Activated CD4-positive, alpha-beta memory T cell treated with anti-CD3 and anti-CD28 coated beads for 36 hours (primary cell): ENCODE measurements at regions of chr10 and their contacts with region 1.

Region 1: DNA sequence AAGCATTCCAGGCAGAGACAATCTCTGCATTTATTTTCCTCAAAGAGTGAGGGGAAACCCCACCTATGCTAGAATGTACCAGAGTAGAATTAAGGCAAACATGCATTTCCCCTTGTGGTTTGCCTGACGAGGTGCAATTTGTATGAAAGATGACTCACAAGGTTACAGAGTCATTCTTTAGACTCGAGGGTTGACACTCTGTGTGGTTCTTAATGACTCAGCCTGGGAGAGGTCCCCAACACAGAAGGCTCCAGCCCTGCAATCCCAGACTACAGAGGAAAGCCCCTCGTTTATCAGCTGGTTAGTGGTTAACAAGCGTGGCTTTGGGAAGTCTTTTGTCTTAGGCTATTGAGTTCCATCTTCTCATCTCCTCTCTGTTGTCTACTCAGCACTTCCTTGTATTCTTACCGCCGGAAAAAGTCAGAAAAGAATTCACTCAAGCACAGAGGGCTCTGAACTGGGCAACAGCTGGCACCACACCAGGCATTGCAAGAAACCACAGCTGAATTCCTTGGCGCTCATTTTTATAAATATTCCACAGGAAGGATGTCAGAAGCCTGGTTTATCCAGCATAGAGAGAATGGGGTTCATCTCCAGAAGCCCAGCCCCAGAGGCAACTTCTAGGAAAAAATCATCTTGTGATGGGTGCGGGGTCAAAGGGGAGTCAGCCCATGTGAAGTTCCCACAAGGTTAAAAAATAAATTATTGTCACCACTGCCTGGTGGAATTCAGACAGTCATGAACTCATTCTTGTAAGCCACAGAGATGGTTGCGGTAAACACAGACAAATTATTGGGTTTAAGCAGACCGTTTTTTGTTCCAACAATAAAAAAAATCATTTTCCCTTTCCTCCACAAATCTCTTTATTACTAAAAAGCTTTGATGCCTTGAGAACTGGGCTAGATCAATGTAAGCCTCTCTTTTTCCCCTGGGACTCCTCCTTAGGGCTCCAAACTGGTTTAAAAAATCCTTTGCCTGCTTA is 24.5 kb upstream of the SVIL start:
- DNase-seq: peak; percentile 81
- H3K4me3 Mint-ChIP-seq: peak overlapping the region; percentile 53
- H3K27ac Mint-ChIP-seq: peak overlapping the region; percentile 49
- H3K4me1 Mint-ChIP-seq: peaks cover 32% of the 10 kb centered on the region
- H3K27me3 Mint-ChIP-seq: peaks cover 4% of the 10 kb centered on the region

Region 2: DNA sequence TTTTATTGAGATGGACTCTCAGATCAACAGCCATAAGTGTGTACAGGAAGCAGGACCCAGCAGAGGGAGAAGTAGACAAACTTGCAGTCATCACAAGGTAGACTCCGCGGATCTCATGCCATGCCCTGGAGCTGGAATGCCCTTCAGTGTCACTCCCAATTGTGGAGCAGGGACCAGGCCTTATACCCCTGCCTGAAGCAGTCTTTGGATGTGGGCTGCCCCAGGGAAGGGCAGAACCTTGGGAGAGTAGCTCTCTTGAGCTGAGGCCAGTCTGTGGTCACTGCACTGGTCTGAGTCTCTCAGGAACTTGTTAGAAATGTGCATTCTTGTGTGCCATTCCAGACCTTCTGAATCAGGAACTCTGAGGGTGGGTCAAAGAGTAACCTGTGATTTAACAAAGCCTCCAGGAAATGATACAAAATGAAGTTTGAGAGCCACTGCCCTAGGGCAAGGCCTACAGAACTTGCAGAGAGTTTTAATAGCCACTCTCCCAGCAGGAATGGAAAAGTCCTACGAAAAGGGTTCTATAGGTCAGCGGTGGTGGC is 302.4 kb before region 1 on chr10:
- CTCF ChIA-PET with region 1: no interaction called
- POLR2A ChIA-PET with region 1: no interaction called
- intact Hi-C with region 1: no loop called
- DNase-seq: no peak
- H3K4me3 Mint-ChIP-seq: no peak overlapping the region
- H3K27ac Mint-ChIP-seq: no peak overlapping the region
- H3K4me1 Mint-ChIP-seq: no peaks in the 10 kb centered on the region
- H3K27me3 Mint-ChIP-seq: no peaks in the 10 kb centered on the region

Region 3: GRCh38 chr10:29590915-29591650 is 68.2 kb before region 1 on chr10:
- CTCF ChIA-PET with region 1: interaction called, 3 read pairs
- POLR2A ChIA-PET with region 1: no interaction called
- intact Hi-C with region 1: loop called (anchors 5 kb)
- DNase-seq: no peak
- H3K4me3 Mint-ChIP-seq: no peak overlapping the region
- H3K27ac Mint-ChIP-seq: peak overlapping the region; percentile 66
- H3K4me1 Mint-ChIP-seq: peaks cover 9% of the 10 kb centered on the region
- H3K27me3 Mint-ChIP-seq: no peaks in the 10 kb centered on the region

Region 4: DNA sequence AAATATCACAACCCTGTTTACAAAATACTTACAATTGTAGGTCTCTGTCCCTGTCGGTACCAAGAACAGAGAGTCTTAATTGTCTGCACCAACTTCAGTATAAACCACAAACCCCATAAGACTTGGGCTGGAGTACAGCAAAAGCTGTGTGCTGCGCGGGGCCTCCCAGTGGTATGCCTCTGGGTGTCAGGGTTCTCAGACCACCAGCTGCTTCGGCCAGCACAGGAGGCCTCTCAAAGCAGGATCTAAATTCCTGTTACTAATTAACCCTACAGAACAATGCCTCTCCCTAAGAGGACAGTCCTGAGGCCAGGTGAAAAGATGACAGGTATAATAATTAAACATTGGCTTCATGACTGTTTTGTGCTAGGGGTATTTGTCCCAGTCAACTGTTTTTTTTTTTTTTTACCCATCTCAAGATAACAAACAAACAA is 23.5 kb before region 1 on chr10:
- CTCF ChIA-PET with region 1: interaction called, 6 read pairs
- POLR2A ChIA-PET with region 1: no interaction called
- intact Hi-C with region 1: loop called (anchors 1 kb)
- DNase-seq: no peak
- H3K4me3 Mint-ChIP-seq: no peak overlapping the region
- H3K27ac Mint-ChIP-seq: peak overlapping the region; percentile 42
- H3K4me1 Mint-ChIP-seq: peaks cover 39% of the 10 kb centered on the region
- H3K27me3 Mint-ChIP-seq: no peaks in the 10 kb centered on the region

Region 5: GRCh38 chr10:29646238-29646902 is 12.9 kb before region 1 on chr10:
- CTCF ChIA-PET with region 1: interaction called, 4 read pairs
- POLR2A ChIA-PET with region 1: interaction called, 4 read pairs
- intact Hi-C with region 1: loop called (anchors 1 kb)
- DNase-seq: peak; percentile 37
- H3K4me3 Mint-ChIP-seq: no peak overlapping the region
- H3K27ac Mint-ChIP-seq: no peak overlapping the region
- H3K4me1 Mint-ChIP-seq: peaks cover 32% of the 10 kb centered on the region
- H3K27me3 Mint-ChIP-seq: no peaks in the 10 kb centered on the region

Region 6: DNA sequence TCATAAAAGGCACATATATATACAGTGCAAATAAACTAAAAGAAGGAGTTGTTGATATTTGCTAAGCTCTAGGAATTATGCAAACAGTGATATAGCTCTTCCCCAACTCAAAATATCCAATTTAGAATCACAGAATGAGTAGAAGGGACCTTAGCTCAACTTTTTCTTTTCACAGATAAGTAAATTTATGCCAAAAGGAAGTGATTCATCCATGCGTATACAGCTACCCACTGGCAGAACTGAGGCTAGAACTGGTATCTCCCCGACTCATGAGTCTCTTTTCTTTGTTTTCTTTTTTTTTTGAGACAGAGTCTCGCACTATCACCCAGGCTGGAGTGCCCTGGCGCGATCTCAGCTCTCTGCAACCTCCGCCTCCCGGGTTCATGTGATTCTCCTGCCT is 29.7 kb after region 1 on chr10:
- CTCF ChIA-PET with region 1: interaction called, 3 read pairs
- POLR2A ChIA-PET with region 1: interaction called, 11 read pairs
- intact Hi-C with region 1: loop called (anchors 1 kb)
- DNase-seq: peak; percentile 35
- H3K4me3 Mint-ChIP-seq: peak overlapping the region; percentile 16
- H3K27ac Mint-ChIP-seq: no peak overlapping the region
- H3K4me1 Mint-ChIP-seq: peaks cover 33% of the 10 kb centered on the region
- H3K27me3 Mint-ChIP-seq: no peaks in the 10 kb centered on the region

Region 7: DNA sequence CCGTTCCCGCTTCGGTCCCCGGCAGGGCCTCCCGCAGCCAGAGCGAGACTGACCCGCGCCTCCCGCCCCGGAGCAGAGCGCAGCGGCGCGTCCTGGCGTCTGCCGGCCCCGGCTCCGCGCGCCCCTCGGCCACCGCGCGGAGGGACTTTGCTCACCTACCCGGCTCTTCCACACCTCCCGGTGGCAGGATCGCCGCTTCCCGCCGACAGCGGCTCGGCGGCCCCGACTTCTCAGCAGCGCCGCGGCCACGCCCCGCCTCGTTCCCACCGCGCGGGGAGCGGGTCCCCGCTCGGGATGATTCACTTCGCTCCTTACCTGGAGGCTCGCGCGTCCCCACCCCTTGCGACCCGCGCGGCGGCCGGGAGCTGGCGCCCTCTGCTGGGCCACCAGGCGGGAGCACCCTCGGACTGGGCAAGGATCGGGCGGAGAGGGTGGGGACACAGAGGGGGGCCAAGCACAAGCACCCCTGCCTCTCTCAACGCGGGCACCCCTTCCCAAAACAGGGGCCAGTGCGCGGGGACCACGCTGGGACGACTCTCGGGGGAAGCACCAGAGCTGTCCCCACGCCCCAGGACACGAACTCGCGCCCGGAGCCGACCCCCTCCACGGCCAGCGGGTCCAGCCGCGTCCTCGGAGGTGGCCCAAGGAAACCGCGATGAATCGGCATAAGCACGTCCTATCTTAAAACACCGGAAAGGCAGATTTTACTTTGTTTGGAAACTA is 76.5 kb after region 1 on chr10:
- CTCF ChIA-PET with region 1: interaction called, 4 read pairs
- POLR2A ChIA-PET with region 1: interaction called, 5 read pairs
- intact Hi-C with region 1: loop called (anchors 2 kb)
- DNase-seq: peak; percentile 90
- H3K4me3 Mint-ChIP-seq: peak overlapping the region; percentile 73
- H3K27ac Mint-ChIP-seq: peak overlapping the region; percentile 59
- H3K4me1 Mint-ChIP-seq: peaks cover 27% of the 10 kb centered on the region
- H3K27me3 Mint-ChIP-seq: peaks cover 7% of the 10 kb centered on the region